Activated CD4-positive, alpha-beta T cell treated with anti-CD3 and anti-CD28 coated beads for 36 hours (primary cell): ENCODE measurements at regions of chr7 and their contacts with region 1.

Region 1: DNA sequence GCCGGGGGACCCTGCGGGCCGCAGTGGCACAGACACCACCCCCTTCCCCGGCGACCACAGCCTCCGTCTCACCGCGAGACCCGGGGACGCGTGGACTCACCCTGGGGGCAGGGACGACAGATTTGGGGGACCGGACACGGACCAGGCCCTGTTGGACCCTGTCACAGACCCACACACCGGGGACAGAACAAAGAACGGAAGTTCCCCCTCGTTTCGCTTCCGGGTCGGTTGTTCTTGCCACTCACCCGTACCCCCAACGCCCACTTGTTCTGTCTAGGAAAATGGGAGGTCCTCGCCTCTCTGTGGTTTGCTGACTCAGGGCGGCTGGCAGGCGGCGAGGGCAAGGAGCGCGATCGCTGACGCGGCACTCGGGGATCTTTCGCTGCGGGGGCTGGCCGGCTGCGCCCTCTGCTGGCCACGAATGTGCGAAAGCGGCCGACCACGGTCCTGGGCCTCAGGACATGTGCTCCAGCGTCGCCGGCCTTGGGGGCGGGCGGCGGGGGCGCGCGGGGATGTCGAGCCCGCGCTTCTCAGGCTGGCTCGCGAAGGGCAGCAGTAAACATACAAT is at the start of gene ZNF3:
- DNase-seq: peak; percentile 99
- ATAC-seq: peak; percentile 83
- H3K4me3 Mint-ChIP-seq: peak within 1 kb of the TSS; percentile 87
- H3K27ac Mint-ChIP-seq: peak within 1 kb of the TSS; percentile 87
- H3K4me1 Mint-ChIP-seq: peaks cover 25% of the 10 kb centered on the region
- H3K27me3 Mint-ChIP-seq: no peaks in the 10 kb centered on the region
- total RNA-seq, gene ZNF3: 18.8 to 19.0 TPM

Region 2: DNA sequence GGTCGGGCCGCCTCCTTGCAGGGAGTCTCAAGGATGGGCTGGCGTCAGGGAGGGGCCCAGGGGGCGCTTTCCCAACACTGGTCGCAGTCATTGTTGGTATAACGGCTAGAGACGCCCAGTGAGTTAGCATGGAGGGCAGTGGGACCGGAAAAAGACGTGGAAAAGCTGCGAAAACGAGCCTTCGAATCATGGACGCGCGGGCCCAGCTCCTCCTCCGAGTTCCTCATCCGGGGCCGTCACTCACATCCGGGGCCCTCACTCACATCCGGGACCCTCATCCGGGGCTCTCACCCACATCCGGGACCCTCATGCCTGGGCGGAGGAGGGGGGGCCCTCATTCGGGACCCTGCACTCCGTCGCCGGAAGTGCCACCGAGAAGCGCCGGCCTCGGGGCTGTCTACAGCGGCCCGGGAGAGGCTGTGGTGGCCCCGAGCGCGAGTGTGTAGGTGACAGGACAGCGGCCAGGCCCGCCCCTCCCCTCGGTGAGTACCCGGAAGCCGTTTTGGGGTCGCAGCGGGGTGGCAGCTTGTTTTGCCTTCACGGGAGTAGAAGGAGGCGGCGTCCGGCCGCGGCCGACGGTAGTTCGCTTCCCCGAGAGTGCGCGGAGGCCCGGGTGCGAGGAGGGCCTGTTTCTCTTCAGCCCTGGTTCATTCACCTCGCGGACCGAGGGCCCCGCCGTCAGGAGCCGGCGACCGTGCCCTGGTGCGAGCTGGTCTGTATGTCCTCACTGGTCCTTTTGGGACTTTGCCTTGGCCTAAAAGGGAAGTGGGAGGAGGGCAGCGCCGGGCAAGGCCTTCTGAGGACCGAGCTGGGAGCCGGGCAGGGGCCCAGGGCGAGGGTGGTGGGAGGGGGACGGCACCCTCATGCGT is 523.1 kb before region 1 on chr7 and contains the start of gene ZNF655:
- CTCF ChIA-PET with region 1: interaction called, 3 read pairs
- POLR2A ChIA-PET with region 1: no interaction called
- intact Hi-C with region 1: loop called in 1 of 2 experiments (anchors 5 kb)
- DNase-seq: peak; percentile 90
- ATAC-seq: peak; percentile 75
- H3K4me3 Mint-ChIP-seq: peak within 1 kb of the TSS; percentile 94
- H3K27ac Mint-ChIP-seq: peak within 1 kb of the TSS; percentile 96
- H3K4me1 Mint-ChIP-seq: peaks cover 49% of the 10 kb centered on the region
- H3K27me3 Mint-ChIP-seq: no peaks in the 10 kb centered on the region
- total RNA-seq, gene ZNF655: 51.1 to 52.0 TPM

Region 3: DNA sequence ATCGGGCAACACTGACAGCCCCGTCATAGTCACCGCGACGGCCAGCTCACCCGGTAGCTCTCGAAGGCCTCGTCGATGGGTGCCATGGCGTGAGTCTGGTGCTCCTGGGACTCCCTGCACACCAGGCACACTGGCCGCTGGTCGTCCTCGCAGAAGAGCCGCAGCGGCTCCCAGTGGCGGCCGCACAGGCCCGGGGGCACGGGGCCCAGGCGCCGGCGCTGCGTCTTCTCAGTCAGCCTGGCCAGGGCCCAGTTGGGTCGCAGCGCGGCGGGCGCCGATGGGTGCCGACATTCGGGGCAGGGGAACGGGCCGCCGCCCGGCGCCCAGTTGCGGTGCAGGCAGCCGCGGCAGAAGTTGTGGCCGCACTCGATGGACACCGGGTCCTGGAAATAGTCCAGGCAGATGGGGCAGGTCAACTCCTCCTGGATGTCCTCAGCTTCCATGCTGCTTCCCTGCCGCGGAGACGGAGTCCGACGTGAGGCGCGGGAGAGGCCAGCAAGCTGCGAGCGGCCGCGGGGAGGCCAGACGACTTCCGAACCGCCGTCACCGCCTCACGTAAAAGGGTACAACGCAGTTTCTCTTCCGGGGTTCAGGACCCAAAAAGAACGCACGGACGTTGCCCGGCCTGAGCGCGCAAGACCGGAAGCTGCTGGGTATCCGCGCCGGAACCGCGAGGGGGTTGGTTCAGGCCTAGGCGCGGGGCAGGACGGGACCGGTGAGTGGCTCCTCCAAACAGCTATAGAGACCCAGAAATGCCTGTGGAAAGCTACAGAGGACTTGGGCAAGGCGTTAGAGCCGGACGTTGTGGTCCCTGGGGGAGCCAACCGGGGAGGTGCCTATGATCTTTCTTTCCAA is 162.4 kb before region 1 on chr7 and contains the start of gene TRIM4:
- CTCF ChIA-PET with region 1: interaction called, 4 read pairs
- POLR2A ChIA-PET with region 1: no interaction called
- intact Hi-C with region 1: loop called (anchors 1 to 10 kb)
- DNase-seq: peak; percentile 96
- ATAC-seq: peak; percentile 99
- H3K4me3 Mint-ChIP-seq: peak within 1 kb of the TSS; percentile 92
- H3K27ac Mint-ChIP-seq: peak within 1 kb of the TSS; percentile 95
- H3K4me1 Mint-ChIP-seq: peaks cover 33% of the 10 kb centered on the region
- H3K27me3 Mint-ChIP-seq: no peaks in the 10 kb centered on the region
- total RNA-seq, gene TRIM4: 23.9 to 25.7 TPM

Region 4: GRCh38 chr7:100049441-100050311 is 31.9 kb before region 1 on chr7 and contains the start of gene ZSCAN21:
- CTCF ChIA-PET with region 1: interaction called, 3 read pairs
- POLR2A ChIA-PET with region 1: no interaction called
- intact Hi-C with region 1: loop called (anchors 1 to 2 kb)
- DNase-seq: peak; percentile 89
- ATAC-seq: peak; percentile 90
- H3K4me3 Mint-ChIP-seq: peak within 1 kb of the TSS; percentile 85
- H3K27ac Mint-ChIP-seq: peak within 1 kb of the TSS; percentile 86
- H3K4me1 Mint-ChIP-seq: peaks cover 17% of the 10 kb centered on the region
- H3K27me3 Mint-ChIP-seq: no peaks in the 10 kb centered on the region
- total RNA-seq, gene ZSCAN21: 6.4 to 7.4 TPM

Region 5: DNA sequence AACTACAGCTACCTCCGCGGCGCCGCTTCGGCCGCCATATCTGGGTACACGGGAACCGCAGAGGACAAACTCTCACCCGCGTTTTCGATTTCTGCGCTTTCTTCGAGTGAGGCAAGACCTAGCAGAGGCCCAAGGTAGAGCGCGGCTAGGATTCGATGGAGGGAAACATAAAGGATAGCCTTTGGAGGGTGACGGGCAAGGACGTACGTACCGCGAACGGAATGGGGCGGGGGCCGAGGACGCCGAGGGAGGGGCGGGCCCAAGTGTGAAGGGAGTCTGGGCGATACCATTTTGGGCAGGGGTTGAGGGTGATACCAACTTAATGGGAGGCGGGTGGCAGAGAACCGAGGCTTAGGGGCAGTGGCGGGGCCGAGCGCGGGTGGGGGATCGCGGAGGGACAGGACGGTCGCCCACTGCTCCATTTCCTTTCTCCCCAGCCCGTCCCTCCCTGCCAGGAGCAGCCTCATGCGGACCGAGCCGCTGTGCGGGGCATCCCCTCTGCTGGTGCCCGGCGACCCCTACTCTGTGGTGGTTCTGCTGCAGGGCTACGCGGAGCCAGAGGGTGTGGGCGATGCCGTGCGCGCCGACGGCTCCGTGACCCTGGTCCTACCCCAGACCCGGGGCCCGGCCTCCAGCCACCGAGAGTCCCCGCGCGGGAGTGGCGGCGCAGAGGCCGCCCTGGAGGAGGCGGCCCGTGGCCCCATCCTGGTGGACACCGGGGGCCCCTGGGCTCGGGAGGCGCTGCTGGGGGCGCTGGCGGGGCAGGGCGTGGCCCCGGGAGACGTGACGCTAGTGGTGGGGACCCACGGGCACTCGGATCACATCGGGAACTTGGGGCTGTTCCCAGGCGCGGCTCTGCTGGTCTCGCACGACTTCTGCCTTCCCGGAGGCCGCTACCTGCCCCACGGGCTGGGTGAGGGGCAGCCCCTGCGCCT is 45.6 kb after region 1 on chr7 and contains the start of gene MBLAC1:
- CTCF ChIA-PET with region 1: interaction called, 6 read pairs
- POLR2A ChIA-PET with region 1: interaction called, 3 read pairs
- intact Hi-C with region 1: loop called (anchors 1 to 5 kb)
- DNase-seq: peak; percentile 95
- ATAC-seq: peak; percentile 74
- H3K4me3 Mint-ChIP-seq: peak within 1 kb of the TSS; percentile 93
- H3K27ac Mint-ChIP-seq: peak within 1 kb of the TSS; percentile 99
- H3K4me1 Mint-ChIP-seq: peaks cover 28% of the 10 kb centered on the region
- H3K27me3 Mint-ChIP-seq: no peaks in the 10 kb centered on the region
- total RNA-seq, gene MBLAC1: 1.6 to 2.2 TPM

Region 6: DNA sequence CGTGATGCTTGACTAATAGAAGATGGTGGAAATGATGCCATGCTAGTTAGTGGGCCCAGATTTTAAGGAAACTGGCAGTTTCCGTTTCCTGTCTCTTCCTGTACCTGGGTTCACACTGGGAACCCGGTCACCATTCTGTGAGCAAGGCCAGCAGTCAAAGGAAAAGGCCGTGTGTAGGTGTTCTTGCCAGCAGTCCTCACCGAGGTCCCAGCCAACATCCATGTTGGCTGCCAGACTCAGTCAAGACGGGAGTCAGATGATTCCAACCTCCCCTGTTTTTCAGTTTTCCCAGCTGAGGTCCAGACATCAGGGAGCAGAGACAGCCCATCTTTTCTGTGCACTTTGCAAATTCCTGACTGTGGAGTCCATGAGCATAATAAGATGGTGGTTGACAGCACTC is 261.1 kb after region 1 on chr7:
- CTCF ChIA-PET with region 1: interaction called, 3 read pairs
- POLR2A ChIA-PET with region 1: no interaction called
- intact Hi-C with region 1: loop called in 1 of 2 experiments (anchors 5 kb)
- DNase-seq: no peak
- ATAC-seq: no peak
- H3K4me3 Mint-ChIP-seq: no peak overlapping the region
- H3K27ac Mint-ChIP-seq: peak overlapping the region; percentile 59
- H3K4me1 Mint-ChIP-seq: peaks cover 44% of the 10 kb centered on the region
- H3K27me3 Mint-ChIP-seq: no peaks in the 10 kb centered on the region